ENCODE measurements at regions of chr1 and their contacts with region 1.

Region 1: DNA sequence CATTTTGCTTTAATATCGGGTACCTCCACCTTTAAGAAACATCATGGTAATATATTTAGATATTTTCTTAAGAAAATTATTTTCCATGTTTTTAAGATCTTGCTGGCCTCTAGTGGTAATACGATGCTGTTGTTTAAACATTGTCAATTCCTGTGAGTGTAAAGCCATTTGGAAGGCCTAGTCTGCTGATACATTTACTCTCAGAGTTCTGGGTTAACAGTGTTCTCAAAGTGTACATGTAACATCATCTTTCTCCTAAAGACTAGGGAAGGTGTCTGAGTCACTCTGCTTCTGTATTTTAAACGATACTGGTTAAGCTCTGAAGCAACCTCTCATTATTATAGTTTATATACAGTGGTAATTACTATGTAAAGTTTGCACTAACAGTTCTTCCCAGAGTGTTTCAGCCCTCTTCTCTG is 189.1 kb downstream of the RASAL2 start:
- DNase-seq: peak in 1 of 4 experiments; percentile 4
- ATAC-seq: 0 out of 3 replicates have a peak, but pooled peaks have one; percentile 34
- H3K4me3 ChIP-seq: no peak overlapping the region
- H3K27ac ChIP-seq: no peak overlapping the region
- H3K4me1 ChIP-seq: no peaks in the 10 kb centered on the region
- H3K27me3 ChIP-seq: no peaks in the 10 kb centered on the region
- CTCF ChIP-seq: peak; percentile 12 to 36 (median 23); a peak in 3 of 6 replicates
- EP300 ChIP-seq: no peak
- POLR2A ChIP-seq: no peak
- RAD21 ChIP-seq: peak; percentile 8 to 15; a peak in 1 of 4 replicates

Region 2: GRCh38 chr1:178031856-178032320 is 251.1 kb before region 1 on chr1:
- CTCF ChIA-PET with region 1: interaction called, 4 read pairs
- POLR2A ChIA-PET with region 1: interaction called, 3 read pairs
- in situ Hi-C with region 1: no loop called
- intact Hi-C with region 1: loop called (anchors 1 kb)
- DNase-seq: peak; percentile 77 to 86 (median 84)
- ATAC-seq: peak; percentile 99
- H3K4me3 ChIP-seq: no peak overlapping the region
- H3K27ac ChIP-seq: no peak overlapping the region
- H3K4me1 ChIP-seq: no peaks in the 10 kb centered on the region
- H3K27me3 ChIP-seq: no peaks in the 10 kb centered on the region
- CTCF ChIP-seq: peak; percentile 71 to 79 (median 76)
- EP300 ChIP-seq: no peak
- POLR2A ChIP-seq: no peak
- RAD21 ChIP-seq: peak; percentile 38 to 62

Region 3: GRCh38 chr1:178052650-178053461 is 230.1 kb before region 1 on chr1:
- CTCF ChIA-PET with region 1: no interaction called
- POLR2A ChIA-PET with region 1: no interaction called
- in situ Hi-C with region 1: no loop called
- intact Hi-C with region 1: loop called (anchors 5 kb)
- DNase-seq: no peak
- ATAC-seq: no peak
- H3K4me3 ChIP-seq: no peak overlapping the region
- H3K27ac ChIP-seq: no peak overlapping the region
- H3K4me1 ChIP-seq: no peaks in the 10 kb centered on the region
- H3K27me3 ChIP-seq: no peaks in the 10 kb centered on the region
- CTCF ChIP-seq: no peak
- EP300 ChIP-seq: no peak
- POLR2A ChIP-seq: no peak
- RAD21 ChIP-seq: no peak

Region 4: DNA sequence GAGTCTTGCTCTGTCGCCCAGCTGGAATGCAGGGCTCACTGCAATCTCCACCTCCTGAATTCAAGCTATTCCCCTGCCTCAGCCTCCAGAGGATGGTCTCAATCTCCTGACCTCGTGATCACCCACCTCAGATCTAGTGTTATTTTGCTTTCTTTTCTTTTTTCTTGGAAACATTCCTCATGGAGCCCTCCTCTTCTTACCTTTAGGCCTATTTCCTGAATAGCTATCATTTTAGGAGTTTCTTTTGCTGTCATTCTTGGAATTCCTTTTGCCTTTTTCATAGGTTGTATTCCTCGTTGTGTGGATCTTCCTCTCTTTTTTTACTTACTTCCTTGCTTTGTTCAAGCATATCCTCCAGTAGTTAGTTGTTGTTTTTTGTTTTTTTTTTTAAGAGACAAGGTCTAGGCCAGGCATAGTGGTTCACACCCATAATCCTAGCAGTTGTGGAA is 15.3 kb before region 1 on chr1:
- CTCF ChIA-PET with region 1: no interaction called
- POLR2A ChIA-PET with region 1: no interaction called
- in situ Hi-C with region 1: no loop called
- intact Hi-C with region 1: no loop called
- DNase-seq: no peak
- ATAC-seq: no peak
- H3K4me3 ChIP-seq: no peak overlapping the region
- H3K27ac ChIP-seq: no peak overlapping the region
- H3K4me1 ChIP-seq: no peaks in the 10 kb centered on the region
- H3K27me3 ChIP-seq: no peaks in the 10 kb centered on the region
- CTCF ChIP-seq: no peak
- EP300 ChIP-seq: no peak
- POLR2A ChIP-seq: no peak
- RAD21 ChIP-seq: no peak

Region 5: GRCh38 chr1:178294654-178295053 is 11.7 kb after region 1 on chr1:
- CTCF ChIA-PET with region 1: no interaction called
- POLR2A ChIA-PET with region 1: no interaction called
- in situ Hi-C with region 1: no loop called
- intact Hi-C with region 1: no loop called
- DNase-seq: no peak
- ATAC-seq: no peak
- H3K4me3 ChIP-seq: no peak overlapping the region
- H3K27ac ChIP-seq: no peak overlapping the region
- H3K4me1 ChIP-seq: no peaks in the 10 kb centered on the region
- H3K27me3 ChIP-seq: no peaks in the 10 kb centered on the region
- CTCF ChIP-seq: no peak
- EP300 ChIP-seq: no peak
- POLR2A ChIP-seq: no peak
- RAD21 ChIP-seq: no peak

Measured in K562 (cell line).